Kidney (tissue), 22 donors: ENCODE measurements at regions of chr1 and their contacts with region 1.

Region 1: DNA sequence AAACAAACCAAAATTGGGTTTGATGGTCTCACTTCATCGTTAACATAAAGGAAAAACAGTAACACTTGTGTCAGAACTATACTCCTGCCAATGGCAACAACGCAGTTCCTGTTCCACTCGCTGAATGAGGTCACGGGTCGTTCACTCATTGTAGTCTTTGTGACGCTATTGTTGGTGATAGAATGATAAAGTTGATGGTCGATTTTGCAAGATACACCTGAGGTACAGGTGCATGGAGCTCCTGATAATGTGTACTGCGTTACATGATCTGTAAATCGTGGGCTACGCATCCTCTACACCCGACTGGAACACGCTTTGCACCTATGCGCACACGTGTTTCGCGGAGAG is 391 bp upstream of the CENPS start:
- DNase-seq: peak in 3 of 5 donors; percentile 22 to 40 (median 35)
- H3K4me3 ChIP-seq: peak overlapping the region; percentile 21 to 98 (median 74)
- H3K27ac ChIP-seq: no peak overlapping the region
- H3K4me1 ChIP-seq: peaks cover 3 to 15% (median 9%) of the 10 kb centered on the region in 3 donors
- H3K27me3 ChIP-seq: no peaks in the 10 kb centered on the region
- CTCF ChIP-seq: no peak

Region 2: GRCh38 chr1:10378081-10378841 is 51.6 kb before region 1 on chr1:
- intact Hi-C with region 1: loop called (anchors 10 kb)
- DNase-seq: peak in 1 of 5 donors; percentile 78
- H3K4me3 ChIP-seq: no peak overlapping the region
- H3K27ac ChIP-seq: no peak overlapping the region
- H3K4me1 ChIP-seq: no peaks in the 10 kb centered on the region
- H3K27me3 ChIP-seq: no peaks in the 10 kb centered on the region
- CTCF ChIP-seq: no peak

Region 3: GRCh38 chr1:10472220-10473144 is 42.6 kb after region 1 on chr1 and contains the start of gene DFFA:
- intact Hi-C with region 1: no loop called
- DNase-seq: peak; percentile 96 to 99 (median 97)
- H3K4me3 ChIP-seq: peak within 1 kb of the TSS; percentile 89 to 97 (median 89)
- H3K27ac ChIP-seq: peak within 1 kb of the TSS; percentile 66 to 67
- H3K4me1 ChIP-seq: peaks cover 0 to 21% (median 3%) of the 10 kb centered on the region in 3 donors
- H3K27me3 ChIP-seq: no peaks in the 10 kb centered on the region
- CTCF ChIP-seq: no peak
- total RNA-seq, gene DFFA: 33.4 TPM